Heart right ventricle (tissue), 16 donors: ENCODE measurements at regions of chr1 and their contacts with region 1.

Region 1: GRCh38 chr1:47785561-47786271 is 211.5 kb downstream of the TRABD2B start:
- DNase-seq: peak; percentile 44 to 45
- ATAC-seq: peak; percentile 66 to 84 (median 80)
- H3K4me3 ChIP-seq: no peak overlapping the region
- H3K27ac ChIP-seq: peak overlapping the region in 3 of 10 donors; percentile 0 to 24 (median 4)
- H3K4me1 ChIP-seq: peaks cover 3 to 52% (median 32%) of the 10 kb centered on the region in 9 donors
- H3K27me3 ChIP-seq: no peaks in the 10 kb centered on the region
- CTCF ChIP-seq: peak in 8 of 9 donors; percentile 10 to 65 (median 46)

Region 2: GRCh38 chr1:47532921-47533792 is 252.6 kb before region 1 on chr1:
- intact Hi-C with region 1: no loop called
- DNase-seq: peak; percentile 56 to 65
- ATAC-seq: peak; percentile 65 to 87 (median 82)
- H3K4me3 ChIP-seq: peak overlapping the region in 9 of 10 donors; percentile 34 to 63 (median 50)
- H3K27ac ChIP-seq: peak overlapping the region in 7 of 10 donors; percentile 0 to 62 (median 43)
- H3K4me1 ChIP-seq: peaks cover 4 to 36% (median 18%) of the 10 kb centered on the region in 9 donors
- H3K27me3 ChIP-seq: peaks cover 0 to 39% (median 1%) of the 10 kb centered on the region in 7 donors
- CTCF ChIP-seq: no peak

Region 3: DNA sequence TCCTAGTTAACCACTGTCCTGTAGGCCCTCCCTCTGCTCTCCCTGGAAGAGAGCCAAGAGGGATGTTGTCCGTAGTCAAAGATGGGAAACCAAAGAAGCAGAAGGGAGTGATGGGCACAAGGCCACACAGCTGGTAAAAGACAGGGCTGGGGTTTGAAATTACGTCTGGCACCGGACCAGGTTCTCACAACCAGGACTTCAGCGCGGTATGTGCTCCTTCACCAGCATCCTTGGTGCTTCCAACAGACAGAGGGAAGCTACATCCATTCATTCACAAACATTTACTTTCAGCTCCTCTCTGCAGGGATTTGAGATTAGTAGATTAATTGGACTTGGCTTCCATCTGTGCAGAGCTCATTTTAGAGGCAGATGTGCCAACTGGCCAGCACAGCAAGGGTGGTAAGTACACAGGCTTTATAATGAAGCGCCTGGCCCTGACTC is 20.2 kb after region 1 on chr1:
- intact Hi-C with region 1: no loop called
- DNase-seq: no peak
- ATAC-seq: no peak
- H3K4me3 ChIP-seq: no peak overlapping the region
- H3K27ac ChIP-seq: no peak overlapping the region
- H3K4me1 ChIP-seq: peaks cover 0 to 3% (median 0%) of the 10 kb centered on the region in 9 donors
- H3K27me3 ChIP-seq: no peaks in the 10 kb centered on the region
- CTCF ChIP-seq: no peak

Region 4: DNA sequence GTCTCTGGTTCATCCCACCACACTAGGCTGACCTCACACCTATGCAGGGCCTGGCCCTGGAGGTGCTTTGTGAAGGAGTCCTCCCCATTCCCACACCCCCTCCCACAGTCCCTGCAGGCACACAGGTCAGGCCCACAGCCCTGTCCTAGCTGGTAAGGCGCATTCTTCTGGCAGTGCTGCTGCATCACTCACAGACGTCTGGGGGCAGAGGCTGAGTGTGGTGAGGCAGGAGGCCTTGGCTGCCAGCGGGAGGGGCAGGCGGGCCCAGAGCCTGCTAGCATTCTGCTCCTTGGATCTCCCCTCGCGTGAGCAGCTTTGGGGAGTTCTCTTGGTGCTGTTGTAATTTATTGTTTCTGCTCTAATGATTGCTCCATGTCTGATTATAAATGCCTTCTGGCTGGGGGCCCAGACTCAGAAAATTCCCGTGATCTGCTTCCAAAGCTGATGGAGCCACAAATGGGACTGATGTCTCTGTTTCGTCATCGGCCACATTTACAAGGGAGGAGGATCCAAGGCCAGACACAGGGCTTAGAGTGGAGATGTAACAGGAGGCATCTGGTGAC is 148.6 kb after region 1 on chr1:
- intact Hi-C with region 1: loop called in 2 of 10 experiments (anchors 10 kb)
- DNase-seq: peak; percentile 57 to 58
- ATAC-seq: peak; percentile 33 to 77 (median 55)
- H3K4me3 ChIP-seq: no peak overlapping the region
- H3K27ac ChIP-seq: peak overlapping the region in 3 of 10 donors; percentile 15 to 63 (median 19)
- H3K4me1 ChIP-seq: peaks cover 0 to 36% (median 11%) of the 10 kb centered on the region in 9 donors
- H3K27me3 ChIP-seq: peaks cover 0 to 3% (median 0%) of the 10 kb centered on the region in 7 donors
- CTCF ChIP-seq: no peak

Region 5: GRCh38 chr1:48003741-48004511 is 218.2 kb after region 1 on chr1:
- intact Hi-C with region 1: loop called in 5 of 10 experiments (anchors 5 to 10 kb)
- DNase-seq: no peak
- ATAC-seq: no peak
- H3K4me3 ChIP-seq: no peak overlapping the region
- H3K27ac ChIP-seq: no peak overlapping the region
- H3K4me1 ChIP-seq: peaks cover 0 to 5% (median 0%) of the 10 kb centered on the region in 9 donors
- H3K27me3 ChIP-seq: peaks cover 0 to 27% (median 15%) of the 10 kb centered on the region in 7 donors
- CTCF ChIP-seq: no peak

Region 6: GRCh38 chr1:48061162-48062136 is 275.7 kb after region 1 on chr1:
- intact Hi-C with region 1: loop called in 1 of 10 experiments (anchors 5 kb)
- DNase-seq: peak in 1 of 2 donors; percentile 74
- ATAC-seq: peak in 6 of 8 donors; percentile 55 to 84 (median 68)
- H3K4me3 ChIP-seq: no peak overlapping the region
- H3K27ac ChIP-seq: no peak overlapping the region
- H3K4me1 ChIP-seq: peaks cover 0 to 8% (median 0%) of the 10 kb centered on the region in 9 donors
- H3K27me3 ChIP-seq: peaks cover 0 to 45% (median 6%) of the 10 kb centered on the region in 7 donors
- CTCF ChIP-seq: peak; percentile 51 to 82 (median 76)